ENCODE measurements at regions of chrX and their contacts with region 1.

Region 1: DNA sequence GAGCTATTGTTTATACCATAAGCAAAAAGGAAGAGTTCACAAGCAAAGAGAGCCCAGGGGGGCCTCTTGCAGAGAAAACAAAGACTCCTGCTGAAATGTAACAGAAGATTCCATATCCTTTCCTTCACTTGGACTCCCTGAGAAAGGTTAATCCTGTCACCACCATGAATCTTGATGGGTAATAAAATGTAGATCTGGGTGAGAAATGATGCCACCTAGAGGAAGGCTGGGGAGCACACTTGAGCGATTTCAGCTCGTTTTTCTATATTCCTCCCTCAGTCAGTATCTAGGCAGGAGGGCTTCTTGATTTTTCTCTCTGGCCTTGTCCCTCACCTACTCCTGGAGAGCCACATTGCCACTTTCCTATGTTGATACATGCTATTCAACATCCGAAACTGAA is 10.2 kb upstream of the KCNE5 start:
- DNase-seq: no peak
- ATAC-seq: peak in 1 of 8 donors; percentile 29
- H3K4me3 ChIP-seq: no peak overlapping the region
- H3K27ac ChIP-seq: no peak overlapping the region
- H3K4me1 ChIP-seq: no peaks in the 10 kb centered on the region
- H3K27me3 ChIP-seq: peaks cover 0 to 11% (median 0%) of the 10 kb centered on the region in 7 donors
- CTCF ChIP-seq: peak in 6 of 9 donors; percentile 27 to 53 (median 44)

Region 2: DNA sequence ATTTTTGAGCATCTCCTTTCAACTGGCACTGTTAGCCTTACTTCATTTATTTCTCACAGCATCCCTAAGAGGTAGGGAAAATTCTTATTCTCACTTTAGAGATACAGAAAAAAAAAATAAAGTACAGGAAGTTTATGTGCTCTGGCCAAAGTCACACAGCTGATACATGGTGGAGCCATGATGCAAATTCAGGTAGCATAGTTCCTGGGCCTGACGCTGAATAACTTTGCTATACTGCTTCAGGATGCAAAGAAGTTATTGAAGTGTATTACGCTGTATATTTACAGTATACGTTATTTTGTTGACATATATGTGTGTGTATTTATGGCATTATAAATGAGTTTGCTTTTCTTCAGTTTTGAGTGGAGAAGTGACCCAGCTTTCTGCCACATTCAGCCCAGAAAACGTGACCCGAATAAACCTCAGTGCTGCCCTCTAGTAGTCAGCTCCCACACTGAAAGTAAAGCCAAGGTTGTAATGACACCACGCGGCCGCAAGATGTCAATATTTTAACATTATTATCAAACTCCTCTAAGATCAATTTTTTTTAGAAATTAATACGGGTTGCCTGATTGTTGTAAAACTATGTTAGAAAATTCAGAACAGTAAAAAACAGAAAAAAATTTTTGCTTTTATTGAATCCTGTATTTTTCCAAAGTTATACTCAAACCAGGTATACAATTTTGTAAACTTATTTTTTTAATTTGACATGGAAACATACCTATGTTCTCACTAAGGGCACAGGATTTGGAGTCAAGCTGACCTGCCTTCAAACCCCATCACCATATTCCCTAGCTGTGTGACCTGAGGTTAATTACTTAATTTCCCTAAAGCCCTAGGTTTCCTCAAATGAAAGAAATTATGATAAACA is 149.5 kb before region 1 on chrX:
- intact Hi-C with region 1: loop called (anchors 2 to 10 kb)
- DNase-seq: peak in 1 of 2 donors; percentile 50
- ATAC-seq: peak in 1 of 8 donors; percentile 52
- H3K4me3 ChIP-seq: no peak overlapping the region
- H3K27ac ChIP-seq: no peak overlapping the region
- H3K4me1 ChIP-seq: no peaks in the 10 kb centered on the region
- H3K27me3 ChIP-seq: peaks cover 0 to 44% (median 0%) of the 10 kb centered on the region in 7 donors
- CTCF ChIP-seq: peak; percentile 62 to 98 (median 86)